ENCODE measurements at regions of chr17 and their contacts with region 1.

Region 1: GRCh38 chr17:46108550-46109110 is 84.6 kb downstream of the KANSL1 start:
- DNase-seq: no peak
- ATAC-seq: peak; percentile 65
- H3K4me3 ChIP-seq: no peak overlapping the region
- H3K27ac ChIP-seq: peak overlapping the region in 1 of 2 donors; percentile 48
- H3K4me1 ChIP-seq: peaks cover 29 to 46% of the 10 kb centered on the region in 2 donors
- H3K27me3 ChIP-seq: no peaks in the 10 kb centered on the region
- CTCF ChIP-seq: no peak

Region 2: DNA sequence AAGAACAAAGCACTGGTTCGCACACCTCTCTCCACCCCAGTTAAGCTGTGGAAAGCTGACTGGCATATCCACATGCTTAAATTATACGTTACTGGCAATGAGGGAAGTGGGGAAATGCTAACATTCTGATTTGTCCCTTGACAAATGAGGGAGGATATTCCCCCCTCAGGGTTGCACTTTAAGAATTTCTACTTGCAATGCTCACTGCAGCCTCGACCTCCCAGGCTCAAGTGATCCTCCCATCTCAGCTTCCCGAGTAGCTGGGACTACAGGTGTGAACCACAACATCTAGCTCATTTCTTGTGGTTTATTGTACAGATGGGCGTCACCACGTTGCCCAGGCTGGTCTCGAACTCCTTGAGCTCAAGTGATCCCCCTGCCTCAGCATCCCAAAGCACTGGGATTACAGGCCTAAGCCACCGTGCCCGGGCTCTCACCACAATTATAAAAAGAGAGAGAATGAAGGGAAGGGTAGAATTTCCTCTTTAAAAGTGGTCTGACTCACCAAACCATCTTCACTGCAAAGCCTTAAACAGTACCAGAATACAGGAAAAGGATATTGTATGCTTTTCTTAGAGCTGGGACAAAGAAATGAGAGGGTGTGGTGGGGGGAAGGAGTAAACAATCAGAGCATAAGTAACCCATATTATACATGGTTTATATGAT is 45.7 kb after region 1 on chr17:
- intact Hi-C with region 1: loop called in 1 of 2 experiments (anchors 5 kb)
- DNase-seq: no peak
- ATAC-seq: no peak
- H3K4me3 ChIP-seq: no peak overlapping the region
- H3K27ac ChIP-seq: peak overlapping the region; percentile 22 to 51
- H3K4me1 ChIP-seq: peaks cover 92 to 100% of the 10 kb centered on the region in 2 donors
- H3K27me3 ChIP-seq: no peaks in the 10 kb centered on the region
- CTCF ChIP-seq: no peak

Measured in left lung (tissue), 14 donors.